SK-N-SH (cell line): ENCODE measurements at regions of chr9 and their contacts with region 1.

Region 1: DNA sequence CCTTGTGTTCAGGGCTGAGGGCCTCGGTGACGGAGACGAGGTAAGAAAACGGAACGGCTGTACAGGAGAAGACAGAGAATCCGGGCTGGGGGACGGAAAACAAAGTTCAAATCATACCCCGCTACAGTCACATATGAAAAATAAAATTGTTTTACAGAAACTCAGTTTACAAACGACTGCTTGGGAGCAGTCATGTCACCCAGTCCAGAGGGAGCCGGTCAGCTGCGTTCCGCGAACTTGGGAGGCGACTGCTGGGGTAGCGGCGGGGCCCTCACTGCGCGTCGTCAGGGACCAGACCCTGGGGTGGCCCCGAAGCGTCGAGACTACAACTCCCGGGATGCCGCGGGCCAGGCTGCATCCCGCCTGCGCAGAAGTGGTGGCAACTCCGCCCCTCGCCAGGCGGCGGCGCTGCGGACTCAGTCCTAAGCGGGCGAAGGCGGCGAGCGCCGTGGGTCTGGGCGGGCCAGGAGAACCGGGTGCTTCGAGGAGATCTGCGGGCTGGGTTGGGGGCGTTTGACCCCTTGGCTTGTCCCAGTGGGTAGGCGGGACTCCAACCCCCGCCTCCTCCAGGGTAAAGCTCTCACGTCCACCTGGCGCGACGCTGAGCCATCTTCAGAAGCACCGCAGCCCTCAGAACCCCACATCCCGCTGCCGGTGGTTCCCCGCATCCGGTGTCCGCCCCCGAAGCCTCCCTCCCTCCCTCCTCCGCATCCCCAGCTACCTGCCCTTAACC is 4.0 kb downstream of the SIT1 start:
- DNase-seq: peak; percentile 97
- H3K4me3 ChIP-seq: peak overlapping the region; percentile 61 to 67
- H3K27ac ChIP-seq: peak overlapping the region in 1 of 2 experiments; percentile 76; a peak in 1 of 4 replicates
- H3K4me1 ChIP-seq: peaks cover 6 to 7% of the 10 kb centered on the region in 2 experiments; a peak in 2 of 4 replicates
- H3K27me3 ChIP-seq: no peaks in the 10 kb centered on the region
- CTCF ChIP-seq: peak; percentile 74
- EP300 ChIP-seq: no peak
- RAD21 ChIP-seq: peak; percentile 76

Region 2: DNA sequence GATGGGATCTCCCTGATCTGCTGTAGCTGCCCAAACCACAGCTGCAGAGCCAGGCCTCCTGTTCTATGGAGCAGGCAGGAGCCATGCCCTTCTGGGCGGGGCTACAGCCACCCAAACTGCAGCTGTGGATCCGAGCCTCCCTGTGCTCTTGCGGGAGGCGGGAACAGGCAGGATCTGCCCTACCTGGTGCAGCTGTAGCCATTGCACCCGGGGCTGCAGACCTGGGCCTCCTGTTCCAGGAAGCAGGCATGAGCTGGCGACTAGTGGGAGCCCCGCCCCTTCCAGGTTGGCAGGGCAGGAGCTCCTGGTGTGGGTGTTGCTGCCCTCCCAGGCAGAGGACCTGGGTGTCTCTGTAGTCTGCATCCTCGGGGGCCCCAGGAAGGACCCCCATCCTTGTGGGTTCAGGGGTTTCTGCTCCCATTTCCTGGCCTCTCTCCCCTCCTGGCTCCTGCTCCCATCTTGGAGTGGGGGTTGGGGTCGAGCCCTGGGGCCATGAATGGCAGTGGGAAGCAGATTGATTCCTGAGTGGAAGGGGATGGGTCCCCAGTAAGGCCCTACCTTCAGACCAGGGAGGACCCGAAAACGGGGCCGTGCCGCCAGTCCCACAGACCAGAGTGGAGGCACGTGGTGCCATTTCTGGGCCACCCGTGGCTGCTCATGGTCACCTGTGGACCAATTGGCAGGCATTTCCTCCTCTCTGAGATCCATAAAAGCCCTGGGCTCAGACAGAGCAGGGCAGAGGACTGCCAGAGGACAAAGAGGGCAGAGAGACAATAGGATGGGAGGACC is 507.8 kb before region 1 on chr9:
- CTCF ChIA-PET with region 1: no interaction called
- POLR2A ChIA-PET with region 1: no interaction called
- DNase-seq: no peak
- H3K4me3 ChIP-seq: no peak overlapping the region
- H3K27ac ChIP-seq: no peak overlapping the region
- H3K4me1 ChIP-seq: no peaks in the 10 kb centered on the region
- H3K27me3 ChIP-seq: no peaks in the 10 kb centered on the region
- CTCF ChIP-seq: no peak
- EP300 ChIP-seq: no peak
- RAD21 ChIP-seq: no peak

Region 3: DNA sequence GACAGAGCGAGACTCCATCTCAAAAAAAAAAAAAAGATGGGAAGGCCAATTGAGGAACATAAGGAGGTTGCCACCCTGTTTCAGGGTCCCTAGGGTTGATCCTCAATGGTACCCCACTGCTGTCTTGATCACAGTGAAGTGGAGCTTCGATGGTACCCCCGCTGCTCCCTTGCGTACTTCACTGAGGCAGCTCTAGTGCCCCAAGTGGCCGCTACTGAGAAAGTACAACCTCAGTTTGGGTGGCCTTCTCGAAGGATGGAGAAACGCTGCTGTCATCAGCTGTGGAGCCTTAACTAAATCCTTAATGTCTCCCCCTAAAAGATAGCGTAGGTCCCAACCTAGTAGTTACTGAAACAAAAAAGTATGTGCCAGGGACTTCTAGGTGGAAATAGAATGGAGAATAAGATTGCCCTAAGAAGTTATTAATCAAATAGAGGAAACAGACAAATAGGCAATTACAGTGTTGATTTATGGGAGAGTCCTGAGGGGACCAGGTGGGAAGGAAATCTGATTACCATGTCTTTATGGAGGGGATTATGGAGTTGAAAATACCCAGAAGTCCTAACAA is 35.4 kb before region 1 on chr9:
- CTCF ChIA-PET with region 1: interaction called, 32 read pairs
- POLR2A ChIA-PET with region 1: no interaction called
- DNase-seq: peak; percentile 77
- H3K4me3 ChIP-seq: no peak overlapping the region
- H3K27ac ChIP-seq: no peak overlapping the region
- H3K4me1 ChIP-seq: peaks cover 7 to 10% of the 10 kb centered on the region in 2 experiments; a peak in 1 of 4 replicates
- H3K27me3 ChIP-seq: 0 out of 2 replicates have a peak, but pooled peaks cover under 1% of the 10 kb centered on the region
- CTCF ChIP-seq: peak; percentile 72
- EP300 ChIP-seq: no peak
- RAD21 ChIP-seq: 0 out of 2 replicates have a peak, but pooled peaks have one; percentile 17

Region 4: DNA sequence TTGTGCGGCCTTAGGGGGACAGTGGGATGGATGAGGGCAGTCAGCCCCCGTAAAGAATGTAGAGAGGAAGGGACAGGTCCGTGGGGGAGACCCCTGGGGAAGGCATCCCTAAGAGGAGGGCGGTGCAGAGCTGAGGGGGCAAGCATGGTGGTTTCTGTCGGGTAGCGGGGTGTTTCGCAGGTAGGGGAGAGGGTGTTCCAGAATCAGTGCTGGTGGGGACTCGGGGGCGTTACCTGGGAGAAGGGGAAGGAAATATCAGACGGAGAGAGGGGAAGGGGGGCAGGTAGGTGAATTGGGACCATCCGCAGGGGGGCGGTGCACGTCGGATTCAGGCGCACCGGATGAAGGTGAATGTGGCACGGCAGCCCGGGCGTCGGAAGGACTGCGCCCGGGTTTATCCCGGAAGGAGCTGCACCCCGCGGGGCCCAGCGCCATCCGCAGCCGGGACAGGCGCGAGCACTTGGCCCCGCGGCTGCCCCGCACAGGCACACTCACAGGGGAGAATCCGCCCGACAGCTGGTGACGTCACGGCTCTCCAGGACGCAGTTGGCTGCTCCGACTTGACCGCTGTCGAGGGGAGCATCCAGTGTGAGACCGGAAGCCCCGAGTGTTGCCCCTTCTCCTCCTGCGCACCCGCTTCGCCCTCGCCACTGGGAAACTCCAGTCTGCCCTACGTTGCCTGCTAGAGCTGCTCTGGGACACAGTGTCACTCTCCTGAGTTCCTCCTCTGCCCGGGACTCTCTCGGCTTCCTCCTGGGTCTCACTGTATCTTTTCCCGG is 29.8 kb before region 1 on chr9:
- CTCF ChIA-PET with region 1: interaction called, 32 read pairs
- POLR2A ChIA-PET with region 1: interaction called, 3 read pairs
- DNase-seq: peak; percentile 82
- H3K4me3 ChIP-seq: peak overlapping the region; percentile 27 to 41; a peak in 3 of 4 replicates
- H3K27ac ChIP-seq: no peak overlapping the region
- H3K4me1 ChIP-seq: peaks cover 0 to 12% of the 10 kb centered on the region in 2 experiments; a peak in 1 of 4 replicates
- H3K27me3 ChIP-seq: 0 out of 2 replicates have a peak, but pooled peaks cover 4% of the 10 kb centered on the region
- CTCF ChIP-seq: no peak
- EP300 ChIP-seq: no peak
- RAD21 ChIP-seq: no peak

Region 5: DNA sequence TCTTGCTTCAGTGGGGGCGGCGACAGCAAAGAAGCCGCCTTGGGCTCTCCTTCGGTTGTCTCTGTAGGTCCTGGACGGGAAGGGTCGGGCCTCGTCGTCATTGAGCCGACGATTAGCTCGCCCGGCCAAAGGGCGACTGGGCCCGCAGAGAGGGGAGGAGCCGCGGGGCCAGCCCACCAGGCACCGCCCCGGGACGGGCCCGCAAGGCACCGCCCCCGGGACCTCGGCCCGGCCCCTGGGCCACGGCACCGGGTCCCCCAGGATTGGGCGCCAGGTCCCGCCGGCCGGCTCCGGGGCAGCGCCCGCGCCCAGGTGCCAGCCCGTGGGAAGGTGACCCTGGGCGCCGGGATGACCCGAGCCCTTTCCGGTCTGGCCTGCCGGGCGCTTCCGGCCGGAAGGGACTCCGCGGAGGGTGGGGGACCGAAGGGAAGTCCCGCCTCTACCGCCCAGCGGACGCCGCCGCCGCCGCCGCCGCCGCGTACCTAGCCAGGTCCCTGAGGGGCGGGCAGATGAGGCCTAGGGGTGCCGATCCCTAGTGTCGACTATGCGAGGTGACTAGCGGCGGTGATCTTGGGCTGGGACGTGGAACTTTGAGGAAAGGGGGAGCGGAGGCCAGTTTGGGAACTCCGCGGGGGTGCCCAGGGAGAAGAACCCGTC is 102.3 kb after region 1 on chr9 and contains the starts of genes GBA2 and RGP1:
- CTCF ChIA-PET with region 1: interaction called, 11 read pairs
- POLR2A ChIA-PET with region 1: no interaction called
- DNase-seq: peak; percentile 94
- H3K4me3 ChIP-seq: peak within 1 kb of the TSS; percentile 97 to 98
- H3K27ac ChIP-seq: peak within 1 kb of the TSS; percentile 70 to 79; a peak in 3 of 4 replicates
- H3K4me1 ChIP-seq: peaks cover 12 to 33% of the 10 kb centered on the region in 2 experiments; a peak in 2 of 4 replicates
- H3K27me3 ChIP-seq: no peaks in the 10 kb centered on the region
- CTCF ChIP-seq: no peak
- EP300 ChIP-seq: peak in 1 of 2 experiments; percentile 54; a peak in 1 of 4 replicates
- RAD21 ChIP-seq: no peak
- polyA plus RNA-seq, gene GBA2: 71.5 and 98.2 TPM in 2 replicates
- polyA plus RNA-seq, gene RGP1: 16.1 and 18.6 TPM in 2 replicates